Posterior vena cava (tissue), 2 donors: ENCODE measurements at regions of chr15 and their contacts with region 1.

Region 1: GRCh38 chr15:56616529-56616928 is 116.8 kb downstream of the ZNF280D start:
- DNase-seq: no peak

Region 2: GRCh38 chr15:57045741-57046382 is 429.3 kb after region 1 on chr15:
- intact Hi-C with region 1: no loop called
- DNase-seq: no peak

Region 3: GRCh38 chr15:57382215-57382614 is 765.7 kb after region 1 on chr15:
- intact Hi-C with region 1: loop called in 1 of 2 experiments (anchors 5 kb)
- DNase-seq: no peak